ENCODE measurements at regions of chrX and their contacts with region 1.

Region 1: GRCh38 chrX:74382613-74383012 is 38.7 kb upstream of the SLC16A2 start:
- DNase-seq: peak; percentile 11 to 82
- H3K4me3 ChIP-seq: no peak overlapping the region
- H3K27ac ChIP-seq: no peak overlapping the region
- H3K4me1 ChIP-seq: no peaks in the 10 kb centered on the region
- H3K27me3 ChIP-seq: no peaks in the 10 kb centered on the region
- CTCF ChIP-seq: peak; percentile 23 to 69 (median 64)

Region 2: DNA sequence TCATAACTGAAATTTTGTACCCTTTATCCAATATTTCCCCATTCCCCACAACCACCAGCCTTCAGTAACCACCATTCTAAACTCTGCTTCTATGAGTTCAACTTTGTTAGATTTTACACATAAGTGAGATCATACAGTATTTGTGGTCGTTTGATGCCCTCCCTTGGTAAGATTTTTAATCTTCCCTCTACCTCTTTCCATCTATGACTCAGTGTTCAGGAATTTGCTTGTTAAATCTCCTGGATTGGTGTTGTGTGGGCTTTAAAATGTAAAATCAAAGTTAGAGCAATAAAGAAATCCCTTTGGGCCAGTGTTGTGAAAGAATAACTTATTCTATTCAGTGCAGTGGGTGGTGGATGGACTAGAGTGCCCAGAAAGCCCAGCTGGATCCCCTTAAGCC is 76.1 kb after region 1 on chrX:
- intact Hi-C with region 1: loop called (anchors 2 kb)
- DNase-seq: no peak
- H3K4me3 ChIP-seq: no peak overlapping the region
- H3K27ac ChIP-seq: no peak overlapping the region
- H3K4me1 ChIP-seq: no peaks in the 10 kb centered on the region
- H3K27me3 ChIP-seq: no peaks in the 10 kb centered on the region
- CTCF ChIP-seq: no peak

Region 3: GRCh38 chrX:74550295-74550802 is 167.7 kb after region 1 on chrX:
- intact Hi-C with region 1: loop called (anchors 1 kb)
- DNase-seq: peak; percentile 25 to 88
- H3K4me3 ChIP-seq: no peak overlapping the region
- H3K27ac ChIP-seq: no peak overlapping the region
- H3K4me1 ChIP-seq: no peaks in the 10 kb centered on the region
- H3K27me3 ChIP-seq: no peaks in the 10 kb centered on the region
- CTCF ChIP-seq: peak; percentile 93 to 97 (median 96)